Panc1 (cell line): ENCODE measurements at regions of chr1 and their contacts with region 1.

Region 1: GRCh38 chr1:245041058-245041698 is 113.6 kb upstream of the KIF26B start:
- DNase-seq: no peak
- ATAC-seq: peak; percentile 56; the same call in 1 of the 2 replicates
- H3K4me3 ChIP-seq: no peak overlapping the region
- H3K27ac ChIP-seq: no peak overlapping the region; the same call in 1 of the 2 replicates
- H3K4me1 ChIP-seq: peaks cover 22% of the 10 kb centered on the region
- H3K27me3 ChIP-seq: no peaks in the 10 kb centered on the region
- CTCF ChIP-seq: peak; percentile 19; the same call in 1 of the 2 replicates

Region 2: GRCh38 chr1:244835276-244836134 is 205.7 kb before region 1 on chr1 and contains the start of gene COX20:
- CTCF ChIA-PET with region 1: no interaction called
- POLR2A ChIA-PET with region 1: no interaction called
- in situ Hi-C with region 1: no loop called
- intact Hi-C with region 1: loop called (anchors 5 kb)
- DNase-seq: peak; percentile 50
- ATAC-seq: peak; percentile 80
- H3K4me3 ChIP-seq: peak within 1 kb of the TSS; percentile 67 to 96
- H3K27ac ChIP-seq: peak within 1 kb of the TSS; percentile 100
- H3K4me1 ChIP-seq: peaks cover 38% of the 10 kb centered on the region
- H3K27me3 ChIP-seq: no peaks in the 10 kb centered on the region
- CTCF ChIP-seq: no peak
- total RNA-seq, gene COX20: 55.0 TPM

Region 3: GRCh38 chr1:244864253-244865027 is 176.7 kb before region 1 on chr1 and contains the start of gene HNRNPU:
- CTCF ChIA-PET with region 1: interaction called, 4 read pairs
- POLR2A ChIA-PET with region 1: interaction called, 3 read pairs
- in situ Hi-C with region 1: no loop called
- intact Hi-C with region 1: loop called (anchors 2 kb)
- DNase-seq: peak; percentile 78
- ATAC-seq: peak; percentile 85
- H3K4me3 ChIP-seq: peak within 1 kb of the TSS; percentile 77 to 88
- H3K27ac ChIP-seq: peak within 1 kb of the TSS; percentile 100
- H3K4me1 ChIP-seq: peaks cover 35% of the 10 kb centered on the region
- H3K27me3 ChIP-seq: no peaks in the 10 kb centered on the region
- CTCF ChIP-seq: no peak
- total RNA-seq, gene HNRNPU: 361 TPM

Region 4: DNA sequence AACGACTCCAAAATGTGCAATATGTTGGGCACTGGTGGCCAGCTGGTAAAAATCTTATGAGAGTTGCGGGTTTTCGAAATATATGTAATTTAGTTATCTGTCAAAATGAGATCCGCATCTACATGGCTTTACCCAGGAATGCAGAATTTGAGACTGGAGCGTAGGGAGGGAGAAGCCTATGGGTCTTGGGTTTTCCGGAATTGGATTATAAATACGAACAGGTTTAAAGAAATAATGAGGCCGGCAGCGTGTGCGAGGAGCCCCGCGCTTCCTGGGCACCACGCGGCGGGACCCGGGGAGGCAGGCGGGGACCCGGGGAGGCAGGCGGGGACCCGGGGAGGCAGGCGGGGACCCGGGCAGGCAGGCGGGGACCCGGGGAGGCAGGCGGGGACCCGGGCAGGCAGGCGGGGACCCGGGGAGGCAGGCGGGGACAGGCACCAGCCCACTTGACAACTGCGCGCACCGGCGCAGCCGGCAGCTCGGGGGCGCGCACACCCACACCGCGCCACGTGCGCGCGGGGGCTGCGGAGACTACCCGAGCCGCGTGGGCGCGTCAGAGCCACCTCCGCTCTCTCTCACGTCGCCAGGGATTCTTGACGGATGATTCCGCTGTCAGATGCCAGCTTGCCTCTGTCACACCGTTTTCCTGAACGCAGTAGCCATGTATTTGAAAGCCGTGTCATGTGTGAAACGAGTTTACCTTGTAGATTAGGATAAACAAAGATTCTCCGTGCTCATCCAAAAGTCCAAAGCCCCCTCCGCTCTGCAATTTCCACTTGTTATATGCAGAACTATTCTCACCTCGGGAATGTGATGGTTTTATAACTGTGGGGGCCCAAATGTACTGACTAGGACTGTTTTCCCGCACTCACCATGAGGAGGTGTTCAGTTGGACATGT is 122.5 kb before region 1 on chr1:
- CTCF ChIA-PET with region 1: no interaction called
- POLR2A ChIA-PET with region 1: no interaction called
- in situ Hi-C with region 1: no loop called
- intact Hi-C with region 1: loop called (anchors 5 kb)
- DNase-seq: no peak
- ATAC-seq: peak; percentile 75
- H3K4me3 ChIP-seq: peak overlapping the region; percentile 47 to 53
- H3K27ac ChIP-seq: no peak overlapping the region
- H3K4me1 ChIP-seq: 0 out of 2 replicates have a peak, but pooled peaks cover 3% of the 10 kb centered on the region
- H3K27me3 ChIP-seq: peaks cover 2% of the 10 kb centered on the region; the same call in 1 of the 2 replicates
- CTCF ChIP-seq: no peak

Region 5: GRCh38 chr1:244970661-244971551 is 70.3 kb before region 1 on chr1:
- CTCF ChIA-PET with region 1: interaction called, 7 read pairs
- POLR2A ChIA-PET with region 1: interaction called, 8 read pairs
- in situ Hi-C with region 1: no loop called
- intact Hi-C with region 1: loop called (anchors 2 kb)
- DNase-seq: peak; percentile 84
- ATAC-seq: peak; percentile 85
- H3K4me3 ChIP-seq: peak overlapping the region; percentile 70 to 72
- H3K27ac ChIP-seq: peak overlapping the region; percentile 100
- H3K4me1 ChIP-seq: peaks cover 20% of the 10 kb centered on the region
- H3K27me3 ChIP-seq: no peaks in the 10 kb centered on the region
- CTCF ChIP-seq: peak; percentile 76

Region 6: DNA sequence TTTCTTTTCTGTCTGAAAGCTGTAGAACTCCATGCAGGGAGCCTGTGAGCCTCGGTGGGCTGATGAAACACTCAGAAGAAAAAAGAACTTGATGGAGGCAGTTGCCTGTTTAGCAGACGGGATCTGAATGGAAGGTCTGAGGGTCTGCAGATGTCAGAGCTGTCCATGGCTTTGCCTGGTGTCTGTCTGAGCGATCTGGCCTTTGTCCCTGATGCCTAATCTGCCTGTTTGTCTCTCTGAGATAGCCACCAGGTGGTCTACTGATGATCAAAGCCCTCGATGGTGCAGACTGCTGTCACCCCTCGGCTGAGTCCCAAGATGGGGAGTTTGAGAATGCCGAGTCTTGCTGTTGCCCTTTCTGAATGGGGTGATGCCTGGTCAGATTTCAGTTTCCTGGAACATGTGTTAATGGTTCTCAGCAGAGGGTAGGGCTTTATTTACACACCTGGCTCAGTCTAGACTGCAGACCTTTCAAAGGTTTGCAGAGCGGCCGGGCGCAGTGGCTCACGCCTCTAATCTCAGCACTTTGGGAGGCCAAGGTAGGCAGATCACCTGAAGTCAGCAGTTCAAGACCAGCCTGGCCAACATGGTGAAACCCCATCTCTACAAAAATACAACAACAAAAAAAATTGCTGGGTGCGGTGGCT is 204.0 kb after region 1 on chr1:
- CTCF ChIA-PET with region 1: no interaction called
- POLR2A ChIA-PET with region 1: no interaction called
- in situ Hi-C with region 1: no loop called
- intact Hi-C with region 1: no loop called
- DNase-seq: no peak
- ATAC-seq: no peak
- H3K4me3 ChIP-seq: no peak overlapping the region
- H3K27ac ChIP-seq: no peak overlapping the region
- H3K4me1 ChIP-seq: no peaks in the 10 kb centered on the region
- H3K27me3 ChIP-seq: no peaks in the 10 kb centered on the region
- CTCF ChIP-seq: no peak

Region 7: GRCh38 chr1:245363461-245364200 is 322.5 kb after region 1 on chr1:
- CTCF ChIA-PET with region 1: no interaction called
- POLR2A ChIA-PET with region 1: no interaction called
- in situ Hi-C with region 1: no loop called
- intact Hi-C with region 1: no loop called
- DNase-seq: no peak
- ATAC-seq: no peak
- H3K4me3 ChIP-seq: no peak overlapping the region
- H3K27ac ChIP-seq: no peak overlapping the region
- H3K4me1 ChIP-seq: no peaks in the 10 kb centered on the region
- H3K27me3 ChIP-seq: no peaks in the 10 kb centered on the region
- CTCF ChIP-seq: no peak